ENCODE measurements at regions of chr11 and their contacts with region 1.

Region 1: DNA sequence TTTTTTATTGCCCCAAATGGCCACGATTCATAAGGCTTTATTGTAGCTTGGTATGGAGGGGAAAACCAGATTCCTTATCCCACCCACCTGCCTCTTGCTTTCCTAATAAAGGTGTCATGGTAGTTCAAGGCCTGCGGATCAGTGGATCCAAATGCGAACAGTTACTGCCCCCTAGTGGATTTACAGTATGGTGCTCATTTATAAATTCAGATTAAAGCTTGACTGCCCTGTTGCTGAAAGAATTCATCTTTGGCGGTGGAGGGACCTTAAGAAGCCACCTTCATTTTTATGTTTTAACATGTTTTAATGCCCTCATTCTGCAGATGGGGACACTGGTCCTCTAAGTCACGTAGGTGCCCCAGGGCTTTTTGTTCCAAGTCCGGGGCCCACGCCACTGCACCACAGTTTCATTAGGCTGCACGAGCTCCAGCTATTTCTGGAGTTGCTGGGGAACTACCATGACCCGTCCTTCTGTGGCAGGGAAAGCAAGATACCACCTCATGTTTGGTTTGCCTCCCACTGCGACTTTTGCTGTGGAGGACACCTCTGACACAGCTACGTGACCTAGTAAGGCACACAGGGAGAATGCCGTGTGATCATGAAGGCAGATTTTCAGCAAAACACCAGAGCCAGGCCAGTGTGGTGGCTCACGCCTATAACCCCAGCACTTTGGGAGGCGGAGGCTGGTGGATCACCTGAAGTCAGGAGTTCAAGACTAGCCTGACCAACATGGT is 15.6 kb upstream of the INCENP start:
- DNase-seq: no peak
- H3K4me3 ChIP-seq: no peak overlapping the region
- H3K27ac ChIP-seq: no peak overlapping the region
- H3K27me3 ChIP-seq: no peaks in the 10 kb centered on the region
- CTCF ChIP-seq: peak; percentile 79

Region 2: GRCh38 chr11:61871158-61871597 is 237.0 kb before region 1 on chr11:
- CTCF ChIA-PET with region 1: interaction called, 57 read pairs
- POLR2A ChIA-PET with region 1: no interaction called
- DNase-seq: peak; percentile 36
- H3K4me3 ChIP-seq: peak overlapping the region; percentile 43
- H3K27ac ChIP-seq: no peak overlapping the region
- H3K27me3 ChIP-seq: peaks cover 2% of the 10 kb centered on the region
- CTCF ChIP-seq: peak; percentile 91

Region 3: DNA sequence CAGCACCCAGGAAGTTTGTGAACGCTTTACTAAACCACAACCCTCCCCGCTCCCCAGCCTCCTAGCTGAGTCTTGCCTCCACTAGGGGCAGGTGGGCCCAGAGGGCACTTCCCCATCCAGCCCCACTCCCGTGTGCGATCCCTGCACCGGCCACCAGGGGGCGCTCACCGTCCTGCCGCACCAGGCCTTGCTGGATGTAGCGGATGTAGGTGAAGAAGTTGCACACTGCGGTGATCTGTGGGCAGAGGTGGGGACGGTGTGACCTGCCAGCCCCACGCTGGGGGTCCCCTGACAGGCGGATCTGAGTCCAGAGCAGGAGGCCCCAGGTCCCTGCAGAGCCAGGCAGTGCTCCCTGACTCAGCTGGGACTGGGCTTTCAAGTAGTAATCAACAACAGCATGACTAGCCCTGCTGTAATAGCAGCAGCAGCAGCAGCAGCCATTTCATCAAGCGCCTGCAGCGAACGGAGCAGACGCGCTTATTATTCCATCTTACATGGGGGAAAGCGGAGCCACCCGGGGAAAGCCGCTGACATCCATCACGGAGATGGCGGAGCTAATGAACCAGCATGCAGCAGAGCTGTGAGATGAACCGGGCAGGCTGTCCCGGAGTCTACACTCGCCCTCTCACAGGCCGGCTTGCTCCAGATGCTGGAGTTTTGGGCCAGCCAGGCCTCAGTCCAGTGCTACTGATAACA is 208.9 kb before region 1 on chr11:
- CTCF ChIA-PET with region 1: interaction called, 202 read pairs
- POLR2A ChIA-PET with region 1: interaction called, 4 read pairs
- DNase-seq: no peak
- H3K4me3 ChIP-seq: no peak overlapping the region
- H3K27ac ChIP-seq: no peak overlapping the region
- H3K27me3 ChIP-seq: no peaks in the 10 kb centered on the region
- CTCF ChIP-seq: peak; percentile 99

Region 4: GRCh38 chr11:61967116-61967923 is 140.9 kb before region 1 on chr11 and contains the start of gene FTH1:
- CTCF ChIA-PET with region 1: interaction called, 24 read pairs
- POLR2A ChIA-PET with region 1: interaction called, 5 read pairs
- DNase-seq: peak; percentile 77
- H3K4me3 ChIP-seq: peak within 1 kb of the TSS; percentile 100
- H3K27ac ChIP-seq: peak within 1 kb of the TSS; percentile 88
- H3K27me3 ChIP-seq: no peaks in the 10 kb centered on the region
- CTCF ChIP-seq: no peak
- polyA plus RNA-seq, gene FTH1: 3,294 and 4,220 TPM in 2 replicates

Region 5: DNA sequence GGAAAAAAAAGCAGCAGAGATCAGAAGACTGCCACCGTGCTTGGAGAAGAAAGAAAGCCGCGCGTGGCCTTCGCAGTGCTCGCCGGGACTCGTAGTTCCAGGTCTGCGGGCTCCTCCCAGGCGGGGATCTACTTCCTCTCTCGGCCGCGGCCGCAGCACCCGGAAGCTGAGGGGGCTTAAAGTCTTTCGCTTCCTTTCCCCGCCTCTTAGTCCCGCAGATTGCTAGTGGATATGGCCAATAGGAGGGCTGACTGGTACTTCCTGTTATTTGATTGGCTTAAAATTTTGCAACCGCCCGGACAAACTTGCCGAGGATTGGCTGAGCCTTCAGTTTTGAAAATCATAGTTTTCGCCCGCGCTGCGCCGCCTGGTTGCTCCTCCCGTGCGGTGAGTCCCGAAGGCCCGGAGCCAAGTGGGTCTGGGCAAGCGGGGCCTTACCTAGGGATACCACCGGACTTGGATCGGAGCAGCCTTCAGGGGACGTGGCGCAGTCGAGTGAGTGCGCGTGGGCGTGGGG is 15.5 kb after region 1 on chr11 and contains the start of gene INCENP:
- CTCF ChIA-PET with region 1: interaction called, 42 read pairs
- POLR2A ChIA-PET with region 1: interaction called, 4 read pairs
- DNase-seq: peak; percentile 96
- H3K4me3 ChIP-seq: peak within 1 kb of the TSS; percentile 100
- H3K27ac ChIP-seq: peak within 1 kb of the TSS; percentile 57
- H3K27me3 ChIP-seq: no peaks in the 10 kb centered on the region
- CTCF ChIP-seq: 0 out of 2 replicates have a peak, but pooled peaks have one; percentile 1
- polyA plus RNA-seq, gene INCENP: 6.4 and 8.2 TPM in 2 replicates